ENCODE measurements at regions of chr17 and their contacts with region 1.

Region 1: GRCh38 chr17:59311130-59311920 is 20.1 kb upstream of the YPEL2 start:
- DNase-seq: peak; percentile 88
- H3K4me3 Mint-ChIP-seq: no peak overlapping the region
- H3K27ac Mint-ChIP-seq: peak overlapping the region; percentile 8
- H3K4me1 Mint-ChIP-seq: peaks cover 5% of the 10 kb centered on the region
- H3K27me3 Mint-ChIP-seq: peaks cover under 1% of the 10 kb centered on the region

Region 2: GRCh38 chr17:59466946-59467801 is 155.8 kb after region 1 on chr17:
- intact Hi-C with region 1: no loop called
- DNase-seq: no peak
- H3K4me3 Mint-ChIP-seq: no peak overlapping the region
- H3K27ac Mint-ChIP-seq: no peak overlapping the region
- H3K4me1 Mint-ChIP-seq: peaks cover 15% of the 10 kb centered on the region
- H3K27me3 Mint-ChIP-seq: no peaks in the 10 kb centered on the region

Region 3: DNA sequence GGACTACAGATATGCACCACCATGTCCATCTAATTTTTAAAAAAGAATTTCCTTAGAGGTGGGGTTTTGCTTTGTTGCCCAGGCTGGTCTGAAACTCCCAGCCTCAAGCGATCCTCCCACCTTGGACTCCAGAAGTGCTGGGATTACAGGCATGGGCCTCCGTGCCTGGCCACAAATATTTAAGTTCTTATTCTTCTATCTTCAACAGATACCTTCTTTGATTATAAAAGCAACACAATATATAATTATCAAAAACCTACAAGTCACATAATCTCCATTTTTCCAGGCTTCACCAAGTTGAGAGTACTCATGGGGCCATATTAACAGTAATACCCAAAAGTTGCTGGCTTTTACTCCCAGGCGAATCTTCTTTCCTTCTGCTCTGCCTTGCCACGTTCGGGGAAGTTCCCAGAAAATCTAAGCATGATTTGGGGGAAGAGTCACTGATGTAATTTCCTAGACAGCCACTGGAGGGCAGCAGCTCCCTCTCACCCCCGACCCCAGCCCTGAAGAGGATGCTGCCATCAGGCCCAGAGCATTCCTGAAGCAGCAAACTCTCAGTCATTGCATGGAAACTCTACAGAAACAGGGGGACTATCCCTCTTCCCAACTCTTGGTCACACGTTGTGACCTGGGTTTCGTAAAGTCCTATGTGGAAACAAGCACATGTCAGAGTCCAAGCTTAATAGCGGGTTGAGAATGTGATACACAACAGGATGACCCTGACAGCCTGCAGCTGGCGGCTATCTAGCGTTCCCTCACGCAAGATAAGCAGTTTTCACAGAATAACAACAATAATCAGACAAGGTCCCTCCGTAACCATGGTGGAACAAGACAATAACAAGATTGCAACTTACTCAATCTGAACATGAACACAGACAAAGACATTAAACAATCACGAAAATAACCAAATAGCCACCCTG is 210.1 kb after region 1 on chr17:
- intact Hi-C with region 1: loop called (anchors 2 kb)
- DNase-seq: peak; percentile 88
- H3K4me3 Mint-ChIP-seq: no peak overlapping the region
- H3K27ac Mint-ChIP-seq: no peak overlapping the region
- H3K4me1 Mint-ChIP-seq: peaks cover 4% of the 10 kb centered on the region
- H3K27me3 Mint-ChIP-seq: peaks cover 16% of the 10 kb centered on the region

Region 4: DNA sequence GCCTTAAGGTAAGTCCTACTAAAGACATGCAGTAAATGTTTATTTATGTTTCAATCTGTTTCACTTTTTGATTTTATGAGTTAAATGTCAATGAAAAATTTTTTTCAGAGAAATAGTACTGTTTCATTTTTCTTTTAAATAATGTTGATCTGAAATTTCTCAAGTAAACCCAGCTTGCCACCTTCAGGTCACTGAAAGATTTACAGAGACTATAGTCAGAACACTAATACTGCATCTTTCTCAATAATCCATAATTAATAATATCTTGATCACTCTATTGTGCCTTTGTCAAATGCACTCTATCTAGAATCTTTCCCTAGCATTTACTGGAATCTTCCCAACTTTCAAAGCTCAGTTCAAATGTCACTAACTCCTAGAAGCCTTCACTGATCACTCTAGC is 247.7 kb after region 1 on chr17:
- intact Hi-C with region 1: loop called (anchors 2 kb)
- DNase-seq: peak; percentile 12
- H3K4me3 Mint-ChIP-seq: no peak overlapping the region
- H3K27ac Mint-ChIP-seq: no peak overlapping the region
- H3K4me1 Mint-ChIP-seq: peaks cover 2% of the 10 kb centered on the region
- H3K27me3 Mint-ChIP-seq: peaks cover 14% of the 10 kb centered on the region